HEK293 (cell line): ENCODE measurements at regions of chr5 and their contacts with region 1.

Region 1: GRCh38 chr5:50962934-50963872 is 296.8 kb downstream of the PARP8 start:
- H3K4me3 ChIP-seq: peak overlapping the region; percentile 46
- H3K27ac ChIP-seq: peak overlapping the region; percentile 51; the same call in 1 of the 2 replicates
- H3K4me1 ChIP-seq: peaks cover 2% of the 10 kb centered on the region; the same call in 1 of the 2 replicates
- CTCF ChIP-seq: peak; percentile 100

Region 2: GRCh38 chr5:50766462-50766861 is 196.7 kb before region 1 on chr5:
- CTCF ChIA-PET with region 1: no interaction called
- POLR2A ChIA-PET with region 1: no interaction called
- H3K4me3 ChIP-seq: no peak overlapping the region
- H3K27ac ChIP-seq: no peak overlapping the region
- H3K4me1 ChIP-seq: no peaks in the 10 kb centered on the region
- CTCF ChIP-seq: no peak

Region 3: DNA sequence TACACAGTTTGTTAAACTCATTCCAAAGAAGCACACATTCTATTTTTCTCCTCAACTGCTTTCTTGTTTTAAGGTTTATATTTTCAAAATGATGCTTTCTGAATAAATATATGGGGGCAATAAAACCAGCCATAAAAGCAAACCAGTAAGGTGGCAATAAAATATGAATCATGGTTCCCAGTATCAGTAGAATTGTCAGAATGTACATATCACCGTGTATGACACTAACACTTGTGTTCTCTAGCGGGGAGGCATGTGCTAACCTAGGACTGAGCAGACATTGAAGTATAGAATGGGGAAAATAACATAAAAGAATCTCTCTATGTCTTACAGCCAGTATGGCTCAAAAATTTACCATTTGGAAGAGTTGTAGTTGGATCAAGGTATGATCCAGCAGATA is 90.2 kb after region 1 on chr5:
- CTCF ChIA-PET with region 1: no interaction called
- POLR2A ChIA-PET with region 1: no interaction called
- H3K4me3 ChIP-seq: no peak overlapping the region
- H3K27ac ChIP-seq: no peak overlapping the region
- H3K4me1 ChIP-seq: no peaks in the 10 kb centered on the region
- CTCF ChIP-seq: no peak

Region 4: GRCh38 chr5:51347704-51348103 is 384.5 kb after region 1 on chr5:
- CTCF ChIA-PET with region 1: interaction called, 16 read pairs
- POLR2A ChIA-PET with region 1: no interaction called
- H3K4me3 ChIP-seq: no peak overlapping the region
- H3K27ac ChIP-seq: no peak overlapping the region
- H3K4me1 ChIP-seq: no peaks in the 10 kb centered on the region
- CTCF ChIP-seq: no peak

Region 5: DNA sequence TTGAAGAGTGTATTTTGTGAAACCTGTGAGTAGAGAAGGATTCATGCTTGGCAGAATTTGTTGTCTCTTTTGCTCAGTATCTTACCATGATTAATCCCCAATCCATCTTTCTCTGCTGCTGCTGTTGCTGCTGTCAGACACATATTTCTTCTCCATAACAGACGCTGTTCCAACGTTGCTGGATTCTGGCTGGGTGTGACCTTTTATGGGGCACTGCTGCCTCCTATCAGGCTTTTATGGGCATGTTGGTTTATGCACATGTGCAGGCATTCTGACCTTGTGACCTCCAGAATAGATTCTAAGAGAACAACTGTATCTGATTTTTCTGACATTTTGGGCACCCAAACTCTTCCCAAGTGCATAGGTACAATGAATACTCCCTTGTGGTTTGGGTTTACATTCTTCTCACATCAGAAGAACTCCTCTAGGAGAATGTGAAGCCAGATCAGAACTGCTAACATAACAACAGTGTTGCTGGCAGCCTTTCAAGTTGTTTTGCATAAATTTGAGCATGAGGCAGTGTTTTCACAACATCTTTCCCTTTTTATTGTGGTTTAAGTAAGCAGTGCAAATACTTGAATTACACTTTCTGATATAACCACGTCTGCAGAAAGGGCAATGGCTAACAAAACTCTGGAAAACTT is 410.8 kb after region 1 on chr5:
- CTCF ChIA-PET with region 1: interaction called, 19 read pairs
- POLR2A ChIA-PET with region 1: interaction called, 3 read pairs
- H3K4me3 ChIP-seq: no peak overlapping the region
- H3K27ac ChIP-seq: peak overlapping the region; percentile 21; the same call in 1 of the 2 replicates
- H3K4me1 ChIP-seq: peaks cover 20% of the 10 kb centered on the region
- CTCF ChIP-seq: no peak

Region 6: DNA sequence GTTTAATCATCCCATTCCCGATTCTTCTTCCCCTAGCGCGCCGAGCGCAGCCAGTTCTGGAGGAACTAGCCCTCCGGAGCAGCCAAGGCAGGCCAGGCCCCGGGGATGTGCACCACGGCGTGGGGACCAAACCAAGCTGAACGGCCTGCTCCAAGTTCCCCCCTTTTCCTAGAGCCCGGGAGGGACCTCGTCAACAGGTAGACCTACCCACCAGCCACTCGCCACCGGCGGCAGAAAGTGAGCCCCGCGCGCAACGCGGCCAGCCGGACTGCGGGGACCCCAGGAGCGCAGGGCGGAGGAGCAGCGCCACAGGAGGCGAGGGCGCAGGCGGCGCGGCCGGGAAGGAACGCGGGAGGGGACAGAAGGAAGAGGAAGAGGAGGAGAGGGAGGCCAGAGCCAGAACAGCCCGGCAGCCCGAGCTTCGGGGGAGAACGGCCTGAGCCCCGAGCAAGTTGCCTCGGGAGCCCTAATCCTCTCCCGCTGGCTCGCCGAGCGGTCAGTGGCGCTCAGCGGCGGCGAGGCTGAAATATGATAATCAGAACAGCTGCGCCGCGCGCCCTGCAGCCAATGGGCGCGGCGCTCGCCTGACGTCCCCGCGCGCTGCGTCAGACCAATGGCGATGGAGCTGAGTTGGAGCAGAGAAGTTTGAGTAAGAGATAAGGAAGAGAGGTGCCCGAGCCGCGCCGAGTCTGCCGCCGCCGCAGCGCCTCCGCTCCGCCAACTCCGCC is 419.7 kb after region 1 on chr5 and contains the start of gene ISL1:
- CTCF ChIA-PET with region 1: interaction called, 19 read pairs
- POLR2A ChIA-PET with region 1: interaction called, 5 read pairs
- H3K4me3 ChIP-seq: peak within 1 kb of the TSS; percentile 74
- H3K27ac ChIP-seq: peak within 1 kb of the TSS; percentile 89
- H3K4me1 ChIP-seq: peaks cover 14% of the 10 kb centered on the region
- CTCF ChIP-seq: no peak

Region 7: GRCh38 chr5:52007230-52007858 is 1044.1 kb after region 1 on chr5:
- CTCF ChIA-PET with region 1: interaction called, 22 read pairs
- POLR2A ChIA-PET with region 1: no interaction called
- H3K4me3 ChIP-seq: peak overlapping the region; percentile 31
- H3K27ac ChIP-seq: no peak overlapping the region
- H3K4me1 ChIP-seq: no peaks in the 10 kb centered on the region
- CTCF ChIP-seq: peak; percentile 59

Region 8: DNA sequence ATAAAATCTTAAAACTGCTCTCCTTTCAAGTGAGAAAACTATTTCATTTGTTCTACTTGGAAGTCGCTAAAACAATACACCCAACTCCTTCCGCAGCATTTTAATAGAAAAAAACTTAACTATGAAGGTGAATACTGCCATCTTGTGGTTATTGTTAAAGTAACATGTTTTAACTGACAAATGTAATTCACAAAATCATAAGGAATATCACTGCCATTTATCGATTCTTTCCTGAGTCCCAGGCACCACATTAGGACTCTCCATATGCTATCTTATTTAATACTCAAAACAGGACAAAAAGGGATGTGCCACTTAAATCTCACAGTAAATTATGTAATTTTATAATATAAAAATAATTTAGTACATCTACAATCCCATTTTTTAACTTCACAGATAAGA is 1694.0 kb after region 1 on chr5:
- CTCF ChIA-PET with region 1: interaction called, 16 read pairs
- POLR2A ChIA-PET with region 1: no interaction called
- H3K4me3 ChIP-seq: no peak overlapping the region
- H3K27ac ChIP-seq: no peak overlapping the region
- H3K4me1 ChIP-seq: no peaks in the 10 kb centered on the region
- CTCF ChIP-seq: peak; percentile 16; the same call in 1 of the 2 replicates